Heart left ventricle (tissue), 16 donors: ENCODE measurements at regions of chr18 and their contacts with region 1.

Region 1: GRCh38 chr18:70195852-70196434 is 9.5 kb downstream of the RTTN start:
- DNase-seq: peak in 1 of 5 donors; percentile 10
- ATAC-seq: peak in 3 of 4 donors; percentile 57 to 82 (median 71)
- H3K4me3 ChIP-seq: no peak overlapping the region
- H3K27ac ChIP-seq: peak overlapping the region in 5 of 12 donors; percentile 24 to 48 (median 36)
- H3K4me1 ChIP-seq: peaks cover 0 to 10% (median 0%) of the 10 kb centered on the region in 12 donors
- H3K27me3 ChIP-seq: no peaks in the 10 kb centered on the region
- CTCF ChIP-seq: peak; percentile 60 to 87 (median 78)
- POLR2A ChIP-seq: no peak

Region 2: DNA sequence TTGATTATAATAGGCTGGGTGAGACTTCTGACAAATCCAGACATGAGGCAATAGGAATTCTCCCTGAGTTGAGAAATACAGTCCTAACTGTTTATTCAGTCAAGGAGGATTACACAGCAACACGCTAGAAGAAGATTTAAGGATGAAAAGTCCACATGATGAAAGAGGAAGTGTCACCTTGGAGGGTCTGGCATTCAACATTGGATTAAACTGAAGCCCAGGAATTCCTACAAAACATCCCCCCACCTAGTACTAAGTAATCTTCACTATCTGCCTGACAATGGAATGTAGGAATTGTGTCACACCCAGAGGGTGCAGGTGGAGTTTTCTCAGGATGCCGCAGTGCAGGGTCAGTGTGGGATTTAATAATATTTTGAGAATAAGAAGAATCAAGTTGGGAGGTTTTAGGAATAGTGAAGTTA is 235.3 kb after region 1 on chr18:
- intact Hi-C with region 1: loop called (anchors 1 to 5 kb)
- DNase-seq: no peak
- ATAC-seq: no peak
- H3K4me3 ChIP-seq: no peak overlapping the region
- H3K27ac ChIP-seq: no peak overlapping the region
- H3K4me1 ChIP-seq: no peaks in the 10 kb centered on the region
- H3K27me3 ChIP-seq: no peaks in the 10 kb centered on the region
- CTCF ChIP-seq: no peak
- POLR2A ChIP-seq: no peak

Region 3: GRCh38 chr18:70454704-70455322 is 258.9 kb after region 1 on chr18:
- intact Hi-C with region 1: loop called in 5 of 10 experiments (anchors 1 to 5 kb)
- DNase-seq: peak in 1 of 5 donors; percentile 16
- ATAC-seq: peak in 1 of 4 donors; percentile 44
- H3K4me3 ChIP-seq: no peak overlapping the region
- H3K27ac ChIP-seq: no peak overlapping the region
- H3K4me1 ChIP-seq: peaks cover 0 to 4% (median 0%) of the 10 kb centered on the region in 12 donors
- H3K27me3 ChIP-seq: peaks cover 0 to 6% (median 0%) of the 10 kb centered on the region in 9 donors
- CTCF ChIP-seq: peak; percentile 67 to 89 (median 78)
- POLR2A ChIP-seq: no peak